ENCODE measurements at regions of chr3 and their contacts with region 1.

Region 1: GRCh38 chr3:141738022-141738890 is at the start of gene RNF7:
- DNase-seq: peak; percentile 95 to 97 (median 97)
- H3K4me3 ChIP-seq: peak within 1 kb of the TSS; percentile 69 to 98 (median 87)
- H3K4me3 Mint-ChIP-seq: peak within 1 kb of the TSS; percentile 94 to 99
- H3K27ac ChIP-seq: peak within 1 kb of the TSS; percentile 95 to 99
- H3K27ac Mint-ChIP-seq: peak within 1 kb of the TSS; percentile 98 to 100 (median 98)
- H3K4me1 ChIP-seq: peaks cover 25 to 37% of the 10 kb centered on the region in 2 donors
- H3K4me1 Mint-ChIP-seq: peaks cover 50% of the 10 kb centered on the region
- H3K27me3 ChIP-seq: no peaks in the 10 kb centered on the region
- H3K27me3 Mint-ChIP-seq: no peaks in the 10 kb centered on the region
- CTCF ChIP-seq: peak; percentile 87
- polyA plus RNA-seq, gene RNF7: 92.2 to 206 (median 187) TPM

Region 2: DNA sequence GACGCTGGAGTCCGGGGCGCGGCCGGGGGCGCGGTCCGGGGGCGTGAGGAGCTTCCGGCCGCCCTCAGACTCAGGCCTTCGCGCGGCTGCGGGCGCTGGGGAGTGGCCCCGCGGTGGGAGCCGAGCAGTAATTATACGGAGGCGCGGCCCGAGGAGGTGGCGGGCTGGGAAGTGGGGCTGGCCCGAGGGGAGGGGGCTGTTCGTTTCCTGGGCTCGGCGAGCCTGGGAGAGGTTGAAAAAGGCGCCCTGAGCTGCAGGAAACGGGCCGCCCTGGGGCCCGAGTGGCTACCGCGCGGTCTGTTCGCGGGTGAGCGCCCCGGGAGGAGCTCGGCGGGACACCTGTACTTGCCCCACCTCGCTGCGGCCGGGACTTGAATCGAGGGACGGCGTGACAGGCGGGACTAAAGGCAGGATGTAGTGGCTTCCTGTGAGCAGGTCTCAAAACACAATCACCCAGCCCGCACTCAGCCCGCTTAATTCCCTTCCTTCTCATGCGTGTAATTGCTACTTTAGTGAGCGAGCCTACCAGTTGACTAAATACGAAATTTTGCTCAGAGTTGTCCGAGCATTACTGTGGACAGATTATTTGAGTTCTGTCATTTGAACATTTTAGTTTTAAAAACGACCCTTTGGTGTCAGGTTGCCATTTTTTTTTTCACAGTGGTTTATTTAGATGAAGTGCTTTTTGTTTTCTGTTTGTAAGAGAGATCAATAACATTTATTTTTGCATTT is 250.6 kb before region 1 on chr3:
- intact Hi-C with region 1: loop called in 1 of 2 experiments (anchors 10 kb)
- DNase-seq: peak in 2 of 3 donors; percentile 34 to 49
- H3K4me3 ChIP-seq: peak overlapping the region; percentile 49 to 83 (median 55)
- H3K4me3 Mint-ChIP-seq: peak overlapping the region; percentile 83 to 91
- H3K27ac ChIP-seq: peak overlapping the region; percentile 58 to 82
- H3K27ac Mint-ChIP-seq: peak overlapping the region; percentile 62 to 91 (median 85)
- H3K4me1 ChIP-seq: peaks cover 55 to 62% of the 10 kb centered on the region in 2 donors
- H3K4me1 Mint-ChIP-seq: peaks cover 69% of the 10 kb centered on the region
- H3K27me3 ChIP-seq: no peaks in the 10 kb centered on the region
- H3K27me3 Mint-ChIP-seq: peaks cover 0 to 2% (median 0%) of the 10 kb centered on the region in 3 donors
- CTCF ChIP-seq: no peak

Region 3: DNA sequence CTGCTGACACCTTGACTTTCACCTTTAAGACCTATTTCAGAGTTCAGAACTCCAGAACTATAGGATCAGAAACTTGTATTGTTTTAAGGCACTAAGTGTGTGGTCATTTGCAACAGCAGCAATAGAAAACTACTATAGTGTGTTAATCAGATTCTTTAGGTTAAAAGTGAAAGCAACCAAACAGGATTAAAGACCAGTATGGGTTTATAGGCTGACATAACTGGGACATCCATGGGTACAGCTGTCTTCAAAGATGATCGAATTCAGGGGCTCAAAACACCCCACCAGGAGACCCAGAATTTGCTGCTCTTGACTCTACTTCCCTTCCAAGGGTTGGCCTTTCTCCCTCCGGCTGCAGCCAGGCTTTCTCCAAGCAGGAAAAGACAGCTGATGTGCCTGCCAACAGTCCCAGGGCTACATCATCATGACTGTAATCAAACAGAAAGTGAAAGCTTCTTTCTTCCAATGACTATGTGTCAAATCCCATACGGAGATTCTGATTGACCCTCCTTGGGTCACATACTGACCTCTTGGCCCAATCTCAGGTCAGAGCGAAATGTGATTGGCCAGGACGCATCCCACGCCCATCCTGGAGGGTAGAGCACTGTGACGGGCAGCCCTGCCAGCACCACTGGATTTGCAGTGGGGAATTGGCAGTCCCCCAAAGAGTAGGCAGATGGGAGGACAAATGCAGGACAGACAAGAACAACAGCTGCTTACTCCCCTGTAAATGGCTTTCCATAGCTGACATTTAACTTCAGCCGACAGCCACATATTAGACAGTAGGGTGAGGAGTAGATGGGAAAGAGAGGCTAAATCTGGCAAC is 51.6 kb before region 1 on chr3:
- intact Hi-C with region 1: loop called in 1 of 2 experiments (anchors 10 kb)
- DNase-seq: peak; percentile 40 to 71 (median 54)
- H3K4me3 ChIP-seq: peak overlapping the region; percentile 26 to 73 (median 50)
- H3K4me3 Mint-ChIP-seq: peak overlapping the region; percentile 81 to 95
- H3K27ac ChIP-seq: peak overlapping the region; percentile 31 to 90
- H3K27ac Mint-ChIP-seq: peak overlapping the region; percentile 87 to 98 (median 94)
- H3K4me1 ChIP-seq: peaks cover 50 to 72% of the 10 kb centered on the region in 2 donors
- H3K4me1 Mint-ChIP-seq: peaks cover 41% of the 10 kb centered on the region
- H3K27me3 ChIP-seq: no peaks in the 10 kb centered on the region
- H3K27me3 Mint-ChIP-seq: peaks cover 0 to 2% (median 0%) of the 10 kb centered on the region in 3 donors
- CTCF ChIP-seq: no peak

Region 4: GRCh38 chr3:141875374-141875892 is 137.2 kb after region 1 on chr3:
- intact Hi-C with region 1: loop called (anchors 2 to 5 kb)
- DNase-seq: peak; percentile 72 to 82 (median 72)
- H3K4me3 ChIP-seq: peak overlapping the region; percentile 83 to 95 (median 94)
- H3K4me3 Mint-ChIP-seq: peak overlapping the region; percentile 90 to 94
- H3K27ac ChIP-seq: peak overlapping the region; percentile 96 to 100
- H3K27ac Mint-ChIP-seq: peak overlapping the region; percentile 98 to 99 (median 99)
- H3K4me1 ChIP-seq: peaks cover 17 to 34% of the 10 kb centered on the region in 2 donors
- H3K4me1 Mint-ChIP-seq: peaks cover 35% of the 10 kb centered on the region
- H3K27me3 ChIP-seq: no peaks in the 10 kb centered on the region
- H3K27me3 Mint-ChIP-seq: peaks cover 0 to 1% (median 0%) of the 10 kb centered on the region in 3 donors
- CTCF ChIP-seq: peak; percentile 93

Region 5: DNA sequence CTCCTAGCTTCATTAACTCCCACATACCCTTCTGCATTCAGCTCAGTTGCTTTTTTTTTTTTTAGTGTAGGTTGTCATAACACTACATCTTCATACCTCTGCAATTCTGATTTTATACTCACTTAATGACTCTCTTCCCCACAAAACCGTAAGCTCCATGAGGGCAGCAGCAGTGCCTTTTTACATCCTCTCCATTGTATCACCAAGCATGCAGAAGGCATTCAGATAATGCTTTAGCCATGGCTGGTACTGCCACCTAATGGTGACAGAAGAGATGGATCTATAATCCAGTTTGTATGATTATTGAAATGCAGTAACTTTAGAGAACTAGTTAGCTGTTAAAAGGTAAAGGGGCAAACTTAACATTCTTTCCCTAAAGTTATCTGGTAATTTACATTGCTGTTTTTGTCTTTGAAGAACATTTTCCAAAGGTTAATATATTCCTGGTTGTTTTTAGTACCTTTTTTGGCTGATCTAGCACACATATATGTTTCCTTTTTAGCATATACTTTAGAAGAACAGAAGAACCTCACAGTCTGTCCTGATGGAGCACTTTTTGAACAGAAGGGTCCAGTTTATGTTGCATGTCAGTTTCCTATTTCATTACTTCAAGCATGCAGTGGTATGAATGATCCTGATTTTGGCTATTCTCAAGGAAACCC is 175.0 kb after region 1 on chr3:
- intact Hi-C with region 1: loop called (anchors 5 to 10 kb)
- DNase-seq: peak; percentile 53 to 68 (median 61)
- H3K4me3 ChIP-seq: no peak overlapping the region
- H3K4me3 Mint-ChIP-seq: no peak overlapping the region
- H3K27ac ChIP-seq: no peak overlapping the region
- H3K27ac Mint-ChIP-seq: peak overlapping the region in 1 of 7 donors; percentile 67
- H3K4me1 ChIP-seq: no peaks in the 10 kb centered on the region
- H3K4me1 Mint-ChIP-seq: peaks cover 2% of the 10 kb centered on the region
- H3K27me3 ChIP-seq: no peaks in the 10 kb centered on the region
- H3K27me3 Mint-ChIP-seq: no peaks in the 10 kb centered on the region
- CTCF ChIP-seq: peak; percentile 83